PC-9 (cell line): ENCODE measurements at regions of chr16 and their contacts with region 1.

Region 1: DNA sequence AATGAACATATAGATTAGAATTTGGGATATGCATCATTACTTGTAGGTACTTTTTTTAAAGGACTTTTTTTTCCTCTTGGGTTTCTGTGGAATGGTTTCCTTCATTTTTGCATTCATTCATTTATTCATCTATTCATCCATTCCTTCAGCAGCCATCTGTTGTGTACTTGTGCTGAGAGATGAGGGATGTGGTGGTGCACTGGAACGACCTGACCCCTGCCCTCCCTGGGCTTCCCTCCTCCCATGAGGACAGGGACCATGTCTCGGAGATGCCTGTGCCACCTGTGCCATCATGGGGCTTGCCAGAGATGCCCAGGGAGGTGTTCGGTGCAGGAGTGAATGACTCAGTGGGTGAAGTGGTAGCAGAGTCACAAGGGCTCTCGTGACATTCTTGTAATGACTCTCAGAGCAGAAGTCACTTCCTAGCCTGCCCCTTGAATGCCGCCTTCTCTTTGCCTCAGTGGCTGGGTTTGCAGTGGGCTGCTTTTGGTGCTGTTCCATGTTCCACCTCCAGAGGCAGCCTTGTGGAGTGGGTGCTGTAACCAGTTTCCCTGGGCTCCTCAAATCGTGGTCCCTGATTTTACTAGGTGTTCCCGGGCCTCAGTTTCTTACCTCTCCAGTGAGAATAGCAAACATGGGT is 43.9 kb downstream of the CLEC16A start:
- DNase-seq: peak; percentile 33 to 48
- H3K4me3 ChIP-seq: no peak overlapping the region
- H3K27ac ChIP-seq: 0 out of 2 replicates have a peak overlapping the region, but pooled peaks have one; percentile 9
- H3K4me1 ChIP-seq: peaks cover 59% of the 10 kb centered on the region
- H3K27me3 ChIP-seq: no peaks in the 10 kb centered on the region
- CTCF ChIP-seq: peak; percentile 75

Region 2: DNA sequence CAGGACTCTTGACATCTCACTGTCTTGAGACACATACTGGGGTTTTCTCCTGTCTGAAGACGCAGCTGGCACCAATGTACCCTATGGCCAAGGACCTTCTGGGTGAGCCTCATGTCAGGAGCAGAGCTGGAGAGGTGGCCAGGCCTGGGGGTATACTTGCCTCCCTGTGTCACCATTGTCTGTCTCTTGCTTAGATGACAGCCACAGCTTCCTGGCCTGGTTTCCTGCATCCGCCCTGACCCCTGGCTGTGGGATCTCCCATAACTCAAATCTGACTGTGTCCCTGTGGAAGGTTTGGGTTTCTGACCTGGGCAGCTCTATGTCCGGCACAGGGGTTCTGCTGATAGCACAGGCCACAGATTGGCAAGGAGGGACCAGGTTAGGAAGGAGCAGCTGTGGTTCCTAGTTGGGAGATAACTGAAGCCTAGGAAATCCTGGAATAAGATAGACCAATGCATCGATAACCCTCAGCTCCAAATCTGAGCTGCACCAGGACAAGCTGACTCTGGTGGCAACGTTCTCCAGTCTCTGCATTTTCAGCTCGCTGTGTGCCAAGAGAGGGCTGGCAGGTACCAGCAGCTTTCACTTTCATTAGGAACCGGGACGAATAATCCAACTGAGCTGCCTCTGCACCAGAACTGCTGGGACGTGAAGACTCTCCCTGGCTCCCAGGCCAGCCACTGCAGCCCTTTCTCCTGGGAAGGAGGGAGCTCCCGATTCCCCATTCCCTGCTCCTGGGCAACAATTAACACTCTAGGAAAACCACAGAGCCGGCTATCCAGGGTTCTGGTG is 51.0 kb before region 1 on chr16:
- CTCF ChIA-PET with region 1: no interaction called
- POLR2A ChIA-PET with region 1: no interaction called
- intact Hi-C with region 1: no loop called
- DNase-seq: no peak
- H3K4me3 ChIP-seq: no peak overlapping the region
- H3K27ac ChIP-seq: no peak overlapping the region
- H3K4me1 ChIP-seq: peaks cover 19% of the 10 kb centered on the region
- H3K27me3 ChIP-seq: no peaks in the 10 kb centered on the region
- CTCF ChIP-seq: no peak

Region 3: DNA sequence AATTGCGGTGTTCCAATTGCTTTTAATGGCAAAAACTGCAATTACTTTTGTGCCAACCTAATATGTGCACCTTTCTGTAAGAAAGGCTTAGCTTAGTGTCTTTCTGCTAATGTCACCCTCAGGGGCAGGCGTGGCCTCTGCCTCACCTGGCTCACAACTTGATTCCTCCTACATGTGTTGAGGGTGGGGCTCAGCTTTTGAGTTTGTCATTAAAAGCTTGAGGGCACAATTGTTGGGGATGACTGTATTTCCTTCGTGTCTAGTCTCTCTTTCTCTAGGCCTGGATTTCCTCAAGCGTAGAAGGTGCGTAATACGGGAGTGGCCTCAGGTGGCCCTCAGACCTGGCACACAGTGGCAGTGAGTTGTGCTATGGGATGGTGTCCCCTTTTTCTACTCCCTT is 50.5 kb after region 1 on chr16:
- CTCF ChIA-PET with region 1: no interaction called
- POLR2A ChIA-PET with region 1: no interaction called
- intact Hi-C with region 1: loop called (anchors 1 kb)
- DNase-seq: peak; percentile 81 to 95
- H3K4me3 ChIP-seq: no peak overlapping the region
- H3K27ac ChIP-seq: peak overlapping the region; percentile 68
- H3K4me1 ChIP-seq: peaks cover 36% of the 10 kb centered on the region
- H3K27me3 ChIP-seq: no peaks in the 10 kb centered on the region
- CTCF ChIP-seq: no peak

Region 4: GRCh38 chr16:11133344-11133943 is 145.2 kb after region 1 on chr16:
- CTCF ChIA-PET with region 1: no interaction called
- POLR2A ChIA-PET with region 1: no interaction called
- intact Hi-C with region 1: loop called (anchors 1 kb)
- DNase-seq: peak; percentile 90 to 96
- H3K4me3 ChIP-seq: peak overlapping the region; percentile 9; the same call in 1 of the 2 replicates
- H3K27ac ChIP-seq: peak overlapping the region; percentile 59
- H3K4me1 ChIP-seq: peaks cover 50% of the 10 kb centered on the region
- H3K27me3 ChIP-seq: no peaks in the 10 kb centered on the region
- CTCF ChIP-seq: no peak

Region 5: DNA sequence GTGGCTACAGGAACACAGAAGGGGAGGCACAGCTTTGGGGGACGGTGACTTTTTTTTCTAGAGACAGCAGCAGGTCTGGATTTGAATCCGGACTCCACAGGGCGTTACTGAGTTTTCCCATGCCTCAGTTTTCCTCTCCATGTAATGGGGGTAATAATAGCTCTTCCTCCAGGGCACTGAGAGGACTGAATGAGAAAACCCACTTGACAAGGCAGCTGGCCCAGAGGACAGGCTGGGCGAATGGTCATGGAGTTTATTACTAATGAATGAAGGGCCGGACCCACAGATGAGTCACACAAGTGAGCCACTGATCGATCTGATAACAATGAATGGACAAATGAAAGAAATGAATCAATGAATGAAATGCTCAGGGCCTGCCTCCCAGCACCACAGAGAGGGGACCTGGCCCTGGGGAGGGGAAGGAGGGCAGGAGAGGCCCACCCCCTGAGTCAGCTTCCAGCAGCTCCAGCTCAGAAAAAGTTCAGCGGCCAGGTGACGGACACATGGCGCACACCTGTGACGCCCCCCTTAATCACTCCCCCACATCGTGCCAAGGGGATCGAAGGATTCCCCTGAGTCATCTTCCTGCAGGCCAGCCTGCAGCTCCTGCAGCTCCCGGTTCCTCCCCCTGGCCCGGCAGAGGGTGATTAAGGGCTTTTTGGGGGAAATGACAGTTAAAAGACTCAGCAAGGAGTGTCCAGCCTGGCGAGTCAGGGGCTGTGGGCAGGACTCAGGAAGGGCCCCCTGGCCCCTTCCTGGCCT is 213.4 kb after region 1 on chr16:
- CTCF ChIA-PET with region 1: interaction called, 3 read pairs
- POLR2A ChIA-PET with region 1: no interaction called
- intact Hi-C with region 1: loop called (anchors 2 kb)
- DNase-seq: peak; percentile 89 to 94
- H3K4me3 ChIP-seq: peak overlapping the region; percentile 28; the same call in 1 of the 2 replicates
- H3K27ac ChIP-seq: peak overlapping the region; percentile 75
- H3K4me1 ChIP-seq: peaks cover 37% of the 10 kb centered on the region
- H3K27me3 ChIP-seq: no peaks in the 10 kb centered on the region
- CTCF ChIP-seq: no peak

Region 6: DNA sequence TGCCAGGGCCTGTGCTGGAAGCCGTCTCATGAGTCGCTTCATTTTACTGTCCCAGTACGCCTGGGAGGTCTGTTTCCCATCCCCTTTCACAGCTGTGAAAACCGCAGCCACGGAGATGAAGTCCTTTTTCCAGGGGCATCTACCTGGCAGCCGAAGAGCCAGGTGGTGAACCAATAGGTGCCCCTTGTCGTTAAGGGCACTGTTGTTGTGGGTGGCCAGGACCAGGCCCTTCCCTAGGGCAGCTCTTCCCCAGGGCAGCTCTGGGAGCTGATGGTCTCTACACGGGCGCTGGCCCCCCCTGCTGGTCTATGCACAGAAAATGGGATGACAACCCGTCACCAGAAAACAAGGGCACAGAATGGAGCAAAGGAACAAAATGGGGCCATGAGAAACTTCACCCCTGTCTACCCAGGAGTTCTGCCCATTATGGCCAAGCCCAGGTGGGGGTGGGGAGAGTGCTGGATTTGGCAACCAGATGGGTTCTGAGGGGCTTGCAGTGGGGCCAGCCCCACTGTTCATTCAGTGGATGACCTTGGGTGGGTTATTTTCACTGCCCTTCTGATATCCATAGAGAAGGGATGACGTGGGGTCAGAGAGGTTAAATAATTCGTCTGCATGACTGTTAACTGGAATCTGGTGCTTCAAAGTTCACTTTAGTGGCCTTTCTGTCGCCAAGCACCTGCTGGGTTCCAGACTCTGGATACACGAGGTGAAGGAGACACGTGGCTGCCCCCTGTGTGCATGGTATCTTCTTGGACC is 368.5 kb after region 1 on chr16:
- CTCF ChIA-PET with region 1: no interaction called
- POLR2A ChIA-PET with region 1: no interaction called
- intact Hi-C with region 1: loop called (anchors 1 kb)
- DNase-seq: peak in 1 of 2 experiments; percentile 48
- H3K4me3 ChIP-seq: 0 out of 2 replicates have a peak overlapping the region, but pooled peaks have one; percentile 20
- H3K27ac ChIP-seq: peak overlapping the region; percentile 81
- H3K4me1 ChIP-seq: peaks cover 44% of the 10 kb centered on the region
- H3K27me3 ChIP-seq: no peaks in the 10 kb centered on the region
- CTCF ChIP-seq: peak; percentile 49; the same call in 1 of the 2 replicates